MCF 10A (cell line): ENCODE measurements at regions of chr9 and their contacts with region 1.

Region 1: GRCh38 chr9:36190388-36191287 is at the start of gene CLTA:
- DNase-seq: peak; percentile 100
- H3K4me3 Mint-ChIP-seq: peak within 1 kb of the TSS; percentile 83
- H3K27ac Mint-ChIP-seq: peak within 1 kb of the TSS; percentile 92
- H3K4me1 Mint-ChIP-seq: peaks cover 35% of the 10 kb centered on the region
- H3K27me3 Mint-ChIP-seq: no peaks in the 10 kb centered on the region
- CTCF ChIP-seq: peak; percentile 46
- total RNA-seq, gene CLTA: 189 and 218 TPM in 2 replicates

Region 2: DNA sequence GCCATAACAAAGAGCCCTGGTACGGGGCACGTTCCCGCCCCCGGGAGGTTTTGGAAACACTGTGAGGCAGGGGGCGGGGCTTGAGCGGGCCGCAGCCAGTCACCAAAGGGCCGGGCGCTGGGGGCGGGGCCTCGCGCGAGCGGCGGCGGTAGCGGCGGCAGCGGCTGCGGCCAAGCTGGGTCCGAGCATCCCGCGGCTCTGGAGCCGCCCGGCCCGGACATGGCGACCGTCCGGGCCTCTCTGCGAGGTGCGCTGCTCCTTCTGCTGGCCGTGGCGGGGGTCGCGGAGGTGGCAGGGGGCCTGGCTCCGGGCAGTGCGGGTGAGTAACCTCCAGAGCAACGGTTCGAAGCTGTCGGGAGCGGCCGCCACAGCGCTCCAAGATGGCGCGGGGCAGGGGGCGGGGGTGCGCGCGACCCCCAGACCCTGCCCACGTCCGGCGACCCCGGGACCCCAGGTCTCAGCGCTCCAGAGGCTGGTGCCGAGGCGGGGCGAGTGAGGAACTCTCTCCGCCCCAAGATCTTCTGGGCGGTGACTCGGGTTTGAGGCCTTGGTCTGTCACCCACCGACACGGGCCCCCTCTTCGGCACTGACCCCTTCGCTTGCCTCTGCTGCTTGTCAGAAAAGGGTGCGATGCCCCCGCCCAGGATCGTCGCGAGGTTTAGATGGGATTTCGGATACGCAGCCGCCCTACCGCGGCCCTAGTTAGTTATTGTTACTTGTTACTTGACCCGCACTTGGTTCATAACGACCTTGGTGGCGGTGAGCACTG is 153.7 kb before region 1 on chr9 and contains the start of gene RECK:
- CTCF ChIA-PET with region 1: interaction called, 3 read pairs
- POLR2A ChIA-PET with region 1: interaction called, 11 read pairs
- intact Hi-C with region 1: no loop called
- DNase-seq: peak; percentile 85
- H3K4me3 Mint-ChIP-seq: peak within 1 kb of the TSS; percentile 76
- H3K27ac Mint-ChIP-seq: peak within 1 kb of the TSS; percentile 50
- H3K4me1 Mint-ChIP-seq: peaks cover 25% of the 10 kb centered on the region
- H3K27me3 Mint-ChIP-seq: peaks cover 12% of the 10 kb centered on the region
- CTCF ChIP-seq: no peak
- total RNA-seq, gene RECK: 3.3 and 3.7 TPM in 2 replicates

Region 3: DNA sequence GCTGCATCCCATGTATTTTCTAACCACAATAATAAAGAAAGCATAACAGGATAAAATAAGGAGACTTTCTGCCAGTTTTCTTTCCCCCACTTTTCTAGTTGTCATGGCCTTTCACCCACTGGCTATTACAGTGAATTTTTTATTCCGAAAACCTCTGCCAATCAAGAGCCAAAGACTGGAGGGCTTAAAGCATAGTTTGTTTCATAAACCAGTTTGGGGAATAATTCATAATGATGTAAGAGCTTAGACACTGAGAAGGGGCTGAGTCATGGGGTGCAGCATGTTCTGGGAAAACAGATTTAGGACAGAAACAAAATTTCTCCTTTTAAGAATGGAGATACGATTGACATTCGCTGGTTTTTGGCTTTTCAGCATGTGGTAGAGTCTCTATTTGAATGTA is 58.6 kb before region 1 on chr9:
- CTCF ChIA-PET with region 1: no interaction called
- POLR2A ChIA-PET with region 1: no interaction called
- intact Hi-C with region 1: no loop called
- DNase-seq: peak; percentile 59
- H3K4me3 Mint-ChIP-seq: no peak overlapping the region
- H3K27ac Mint-ChIP-seq: peak overlapping the region; percentile 54
- H3K4me1 Mint-ChIP-seq: peaks cover 2% of the 10 kb centered on the region
- H3K27me3 Mint-ChIP-seq: peaks cover 5% of the 10 kb centered on the region
- CTCF ChIP-seq: no peak

Region 4: DNA sequence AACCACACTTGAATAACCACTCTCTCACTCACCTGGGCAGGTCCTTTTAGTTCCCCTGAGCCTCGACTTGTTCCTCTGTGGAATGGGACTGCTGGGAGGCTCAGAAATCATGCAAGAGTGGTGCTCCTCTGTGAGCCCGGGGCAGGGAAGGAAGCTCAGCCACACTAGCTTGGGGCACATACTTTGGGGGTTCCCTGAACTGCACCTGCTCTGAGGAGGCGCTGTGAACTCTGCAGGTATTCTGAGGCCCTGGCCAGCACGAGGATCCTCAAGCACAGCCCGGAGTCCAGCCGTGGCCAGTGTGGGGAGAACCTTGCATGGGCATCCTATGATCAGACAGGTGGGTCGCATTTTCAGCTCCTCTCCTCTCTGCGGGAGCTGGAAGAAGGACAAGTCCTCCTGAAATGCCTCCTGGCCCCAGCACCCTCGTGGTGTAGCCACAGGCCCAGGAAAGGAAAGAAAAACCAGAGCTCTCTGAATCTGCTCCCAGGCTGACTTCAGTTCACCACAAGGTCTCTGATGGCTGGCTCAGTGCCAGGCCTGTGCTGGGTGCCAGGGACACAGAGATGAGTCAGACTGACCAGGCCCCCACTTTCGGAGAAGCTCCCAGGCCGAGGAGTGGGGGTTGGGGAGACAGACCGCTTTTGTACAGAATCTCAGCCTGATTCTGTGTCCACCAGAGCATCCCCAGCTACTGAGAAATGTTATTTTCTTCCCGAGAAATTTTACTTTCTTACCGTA is 42.2 kb before region 1 on chr9:
- CTCF ChIA-PET with region 1: no interaction called
- POLR2A ChIA-PET with region 1: interaction called, 15 read pairs
- intact Hi-C with region 1: no loop called
- DNase-seq: peak; percentile 98
- H3K4me3 Mint-ChIP-seq: no peak overlapping the region
- H3K27ac Mint-ChIP-seq: no peak overlapping the region
- H3K4me1 Mint-ChIP-seq: no peaks in the 10 kb centered on the region
- H3K27me3 Mint-ChIP-seq: peaks cover 23% of the 10 kb centered on the region
- CTCF ChIP-seq: no peak

Region 5: GRCh38 chr9:36204906-36205547 is 14.4 kb after region 1 on chr9:
- CTCF ChIA-PET with region 1: interaction called, 28 read pairs
- POLR2A ChIA-PET with region 1: interaction called, 26 read pairs
- intact Hi-C with region 1: no loop called
- DNase-seq: no peak
- H3K4me3 Mint-ChIP-seq: no peak overlapping the region
- H3K27ac Mint-ChIP-seq: no peak overlapping the region
- H3K4me1 Mint-ChIP-seq: no peaks in the 10 kb centered on the region
- H3K27me3 Mint-ChIP-seq: no peaks in the 10 kb centered on the region
- CTCF ChIP-seq: no peak

Region 6: DNA sequence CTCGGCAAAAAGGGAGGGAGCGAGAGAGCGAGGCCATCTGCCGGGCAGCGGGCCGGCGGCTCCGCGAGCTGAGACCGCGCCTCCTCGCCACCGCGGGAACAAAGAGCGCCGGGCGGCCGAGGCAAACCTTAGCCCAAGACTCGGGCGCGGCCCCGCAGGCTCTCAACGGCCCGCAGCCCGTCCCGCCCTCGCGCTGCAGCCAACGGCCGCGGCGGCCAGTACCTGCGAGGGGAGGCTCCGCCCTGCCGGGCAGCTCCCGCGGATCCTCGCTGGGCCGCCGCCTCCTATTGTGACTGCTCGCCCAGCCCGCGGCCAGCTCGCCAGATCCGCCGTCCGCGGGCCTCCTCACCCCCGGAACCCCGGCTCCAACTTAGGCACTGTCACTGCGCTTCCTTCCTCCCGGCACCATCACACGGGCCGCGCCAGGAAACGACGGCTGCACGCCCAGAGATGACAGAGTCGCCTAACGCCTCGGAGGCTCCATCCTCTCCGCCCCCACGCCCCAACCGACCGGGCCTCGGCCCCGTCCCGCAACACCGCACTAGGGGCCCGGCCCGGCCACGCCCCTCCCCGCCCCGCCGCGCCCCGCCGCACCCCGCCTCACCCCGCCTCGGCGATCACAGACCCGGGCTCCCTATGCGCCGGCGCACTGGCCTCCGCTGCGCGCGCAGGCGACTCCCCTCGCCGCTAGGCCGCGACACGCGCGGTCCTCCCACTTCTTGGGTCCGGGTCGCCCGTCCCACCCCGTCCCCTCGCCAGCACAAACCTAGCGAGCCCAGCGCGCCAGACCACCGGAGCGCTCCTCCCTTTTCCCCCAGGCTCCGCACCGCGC is 209.9 kb after region 1 on chr9:
- CTCF ChIA-PET with region 1: interaction called, 4 read pairs
- POLR2A ChIA-PET with region 1: interaction called, 14 read pairs
- intact Hi-C with region 1: no loop called
- DNase-seq: peak; percentile 86
- H3K4me3 Mint-ChIP-seq: peak overlapping the region; percentile 78
- H3K27ac Mint-ChIP-seq: peak overlapping the region; percentile 84
- H3K4me1 Mint-ChIP-seq: peaks cover 24% of the 10 kb centered on the region
- H3K27me3 Mint-ChIP-seq: no peaks in the 10 kb centered on the region
- CTCF ChIP-seq: no peak

Region 7: GRCh38 chr9:37215830-37216229 is 1025.2 kb after region 1 on chr9:
- CTCF ChIA-PET with region 1: no interaction called
- POLR2A ChIA-PET with region 1: no interaction called
- intact Hi-C with region 1: no loop called
- DNase-seq: peak; percentile 11
- H3K4me3 Mint-ChIP-seq: no peak overlapping the region
- H3K27ac Mint-ChIP-seq: no peak overlapping the region
- H3K4me1 Mint-ChIP-seq: peaks cover 6% of the 10 kb centered on the region
- H3K27me3 Mint-ChIP-seq: no peaks in the 10 kb centered on the region
- CTCF ChIP-seq: no peak